ENCODE measurements at regions of chr14 and their contacts with region 1.

Region 1: GRCh38 chr14:91317381-91318308 is 73.1 kb upstream of the GPR68 start:
- DNase-seq: peak; percentile 51 to 98 (median 88)
- ATAC-seq: peak; percentile 34
- H3K4me3 ChIP-seq: peak overlapping the region; percentile 7 to 26
- H3K4me3 Mint-ChIP-seq: peak overlapping the region; percentile 75
- H3K27ac ChIP-seq: peak overlapping the region; percentile 76 to 89
- H3K27ac Mint-ChIP-seq: peak overlapping the region; percentile 96
- H3K4me1 ChIP-seq: peaks cover 77% of the 10 kb centered on the region
- H3K4me1 Mint-ChIP-seq: peaks cover 71% of the 10 kb centered on the region
- H3K27me3 ChIP-seq: no peaks in the 10 kb centered on the region
- H3K27me3 Mint-ChIP-seq: no peaks in the 10 kb centered on the region
- CTCF ChIP-seq: no peak

Region 2: GRCh38 chr14:90440021-90440451 is 877.6 kb before region 1 on chr14:
- CTCF ChIA-PET with region 1: no interaction called
- POLR2A ChIA-PET with region 1: no interaction called
- intact Hi-C with region 1: no loop called
- DNase-seq: no peak
- ATAC-seq: no peak
- H3K4me3 ChIP-seq: no peak overlapping the region
- H3K4me3 Mint-ChIP-seq: no peak overlapping the region
- H3K27ac ChIP-seq: no peak overlapping the region
- H3K27ac Mint-ChIP-seq: no peak overlapping the region
- H3K4me1 ChIP-seq: no peaks in the 10 kb centered on the region
- H3K4me1 Mint-ChIP-seq: no peaks in the 10 kb centered on the region
- H3K27me3 ChIP-seq: no peaks in the 10 kb centered on the region
- H3K27me3 Mint-ChIP-seq: no peaks in the 10 kb centered on the region
- CTCF ChIP-seq: no peak

Region 3: GRCh38 chr14:91220581-91221274 is 96.9 kb before region 1 on chr14:
- CTCF ChIA-PET with region 1: no interaction called
- POLR2A ChIA-PET with region 1: no interaction called
- intact Hi-C with region 1: no loop called
- DNase-seq: no peak
- ATAC-seq: no peak
- H3K4me3 ChIP-seq: no peak overlapping the region
- H3K4me3 Mint-ChIP-seq: no peak overlapping the region
- H3K27ac ChIP-seq: no peak overlapping the region
- H3K27ac Mint-ChIP-seq: no peak overlapping the region
- H3K4me1 ChIP-seq: peaks cover 15% of the 10 kb centered on the region
- H3K4me1 Mint-ChIP-seq: peaks cover 34% of the 10 kb centered on the region
- H3K27me3 ChIP-seq: no peaks in the 10 kb centered on the region
- H3K27me3 Mint-ChIP-seq: no peaks in the 10 kb centered on the region
- CTCF ChIP-seq: no peak

Region 4: GRCh38 chr14:91332151-91332985 is 14.7 kb after region 1 on chr14:
- CTCF ChIA-PET with region 1: interaction called, 10 read pairs
- POLR2A ChIA-PET with region 1: interaction called, 4 read pairs
- intact Hi-C with region 1: no loop called
- DNase-seq: no peak
- ATAC-seq: no peak
- H3K4me3 ChIP-seq: no peak overlapping the region
- H3K4me3 Mint-ChIP-seq: peak overlapping the region; percentile 29
- H3K27ac ChIP-seq: peak overlapping the region; percentile 33 to 95
- H3K27ac Mint-ChIP-seq: peak overlapping the region; percentile 99
- H3K4me1 ChIP-seq: peaks cover 63% of the 10 kb centered on the region
- H3K4me1 Mint-ChIP-seq: peaks cover 70% of the 10 kb centered on the region
- H3K27me3 ChIP-seq: no peaks in the 10 kb centered on the region
- H3K27me3 Mint-ChIP-seq: no peaks in the 10 kb centered on the region
- CTCF ChIP-seq: no peak

Region 5: GRCh38 chr14:91510174-91511042 is 192.8 kb after region 1 on chr14 and contains the start of gene PPP4R3A:
- CTCF ChIA-PET with region 1: no interaction called
- POLR2A ChIA-PET with region 1: interaction called, 4 read pairs
- intact Hi-C with region 1: loop called in 1 of 2 experiments (anchors 2 kb)
- DNase-seq: peak; percentile 84 to 99 (median 93)
- ATAC-seq: peak; percentile 86
- H3K4me3 ChIP-seq: peak within 1 kb of the TSS; percentile 48 to 96
- H3K4me3 Mint-ChIP-seq: peak within 1 kb of the TSS; percentile 100
- H3K27ac ChIP-seq: peak within 1 kb of the TSS; percentile 94 to 98
- H3K27ac Mint-ChIP-seq: peak within 1 kb of the TSS; percentile 100
- H3K4me1 ChIP-seq: peaks cover 26% of the 10 kb centered on the region
- H3K4me1 Mint-ChIP-seq: peaks cover 32% of the 10 kb centered on the region
- H3K27me3 ChIP-seq: no peaks in the 10 kb centered on the region
- H3K27me3 Mint-ChIP-seq: no peaks in the 10 kb centered on the region
- CTCF ChIP-seq: no peak
- total RNA-seq, gene PPP4R3A: 279 to 285 TPM

Region 6: DNA sequence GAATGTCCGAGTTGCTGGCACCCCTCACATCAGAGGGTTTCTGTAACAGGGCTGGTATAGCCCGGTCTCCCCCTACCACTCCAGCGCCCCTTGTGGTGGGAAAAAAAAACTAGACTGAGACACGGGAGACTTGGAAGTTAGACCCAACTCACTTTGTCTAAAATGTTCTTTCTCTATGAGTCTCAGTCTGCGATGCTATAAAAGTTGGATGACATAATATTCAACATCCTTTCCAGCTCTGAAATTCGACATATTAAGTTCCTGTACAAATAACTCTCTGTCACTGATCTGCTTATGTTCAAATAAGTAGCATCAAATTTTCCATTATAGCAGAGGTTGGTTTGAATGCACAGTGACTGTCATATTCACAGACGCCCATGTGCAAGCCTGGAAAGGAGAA is 575.4 kb after region 1 on chr14:
- CTCF ChIA-PET with region 1: no interaction called
- POLR2A ChIA-PET with region 1: no interaction called
- intact Hi-C with region 1: no loop called
- DNase-seq: peak in 3 of 9 experiments; percentile 36 to 61 (median 53)
- ATAC-seq: peak; percentile 30
- H3K4me3 ChIP-seq: no peak overlapping the region
- H3K4me3 Mint-ChIP-seq: no peak overlapping the region
- H3K27ac ChIP-seq: no peak overlapping the region
- H3K27ac Mint-ChIP-seq: peak overlapping the region; percentile 57
- H3K4me1 ChIP-seq: peaks cover 56% of the 10 kb centered on the region
- H3K4me1 Mint-ChIP-seq: peaks cover 66% of the 10 kb centered on the region
- H3K27me3 ChIP-seq: no peaks in the 10 kb centered on the region
- H3K27me3 Mint-ChIP-seq: no peaks in the 10 kb centered on the region
- CTCF ChIP-seq: peak; percentile 50

Region 7: GRCh38 chr14:93086441-93087055 is 1768.9 kb after region 1 on chr14:
- CTCF ChIA-PET with region 1: no interaction called
- POLR2A ChIA-PET with region 1: no interaction called
- intact Hi-C with region 1: no loop called
- DNase-seq: no peak
- ATAC-seq: no peak
- H3K4me3 ChIP-seq: no peak overlapping the region
- H3K4me3 Mint-ChIP-seq: no peak overlapping the region
- H3K27ac ChIP-seq: peak overlapping the region in 1 of 2 experiments; percentile 46
- H3K27ac Mint-ChIP-seq: peak overlapping the region; percentile 83
- H3K4me1 ChIP-seq: peaks cover 39% of the 10 kb centered on the region
- H3K4me1 Mint-ChIP-seq: peaks cover 69% of the 10 kb centered on the region
- H3K27me3 ChIP-seq: no peaks in the 10 kb centered on the region
- H3K27me3 Mint-ChIP-seq: no peaks in the 10 kb centered on the region
- CTCF ChIP-seq: no peak

Measured in CD8-positive, alpha-beta T cell (primary cell).